ENCODE measurements at regions of chr12 and their contacts with region 1.

Region 1: DNA sequence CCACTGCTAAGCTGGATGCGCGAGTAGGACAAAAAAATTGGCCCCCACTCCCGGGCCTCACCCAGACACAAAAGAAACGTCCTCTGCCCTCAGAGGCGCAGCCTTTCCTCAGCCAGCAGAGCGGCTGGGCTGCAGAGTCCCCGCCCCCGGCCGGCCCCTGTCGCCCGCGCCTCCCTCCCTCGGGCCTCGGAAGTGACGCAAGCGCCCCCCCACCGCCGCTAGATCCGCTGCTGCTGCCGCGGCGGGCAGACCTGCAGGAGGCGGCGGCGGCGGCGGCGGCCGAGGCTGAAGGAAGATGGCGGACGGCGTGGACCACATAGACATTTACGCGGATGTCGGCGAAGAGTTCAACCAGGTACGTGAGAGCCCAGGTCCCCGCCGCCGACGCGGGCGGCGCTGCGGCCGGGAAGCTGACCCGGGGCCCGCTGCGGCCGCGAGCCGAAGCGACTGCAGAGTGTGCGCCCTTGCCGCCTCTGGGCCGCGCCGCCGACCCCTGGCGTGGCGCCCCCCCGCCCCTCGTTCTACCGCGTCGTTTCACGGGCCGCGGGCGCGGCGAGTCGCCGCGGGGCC is at the start of gene CPSF6:
- DNase-seq: peak; percentile 94 to 99 (median 96)
- ATAC-seq: peak; percentile 88
- H3K4me3 ChIP-seq: peak within 1 kb of the TSS; percentile 84 to 95
- H3K4me3 Mint-ChIP-seq: peak within 1 kb of the TSS; percentile 95
- H3K27ac ChIP-seq: peak within 1 kb of the TSS; percentile 68 to 89
- H3K27ac Mint-ChIP-seq: peak within 1 kb of the TSS; percentile 99
- H3K4me1 ChIP-seq: peaks cover 36% of the 10 kb centered on the region
- H3K4me1 Mint-ChIP-seq: peaks cover 51% of the 10 kb centered on the region
- H3K27me3 ChIP-seq: no peaks in the 10 kb centered on the region
- H3K27me3 Mint-ChIP-seq: no peaks in the 10 kb centered on the region
- CTCF ChIP-seq: no peak
- total RNA-seq, gene CPSF6: 78.9 to 81.3 TPM

Region 2: DNA sequence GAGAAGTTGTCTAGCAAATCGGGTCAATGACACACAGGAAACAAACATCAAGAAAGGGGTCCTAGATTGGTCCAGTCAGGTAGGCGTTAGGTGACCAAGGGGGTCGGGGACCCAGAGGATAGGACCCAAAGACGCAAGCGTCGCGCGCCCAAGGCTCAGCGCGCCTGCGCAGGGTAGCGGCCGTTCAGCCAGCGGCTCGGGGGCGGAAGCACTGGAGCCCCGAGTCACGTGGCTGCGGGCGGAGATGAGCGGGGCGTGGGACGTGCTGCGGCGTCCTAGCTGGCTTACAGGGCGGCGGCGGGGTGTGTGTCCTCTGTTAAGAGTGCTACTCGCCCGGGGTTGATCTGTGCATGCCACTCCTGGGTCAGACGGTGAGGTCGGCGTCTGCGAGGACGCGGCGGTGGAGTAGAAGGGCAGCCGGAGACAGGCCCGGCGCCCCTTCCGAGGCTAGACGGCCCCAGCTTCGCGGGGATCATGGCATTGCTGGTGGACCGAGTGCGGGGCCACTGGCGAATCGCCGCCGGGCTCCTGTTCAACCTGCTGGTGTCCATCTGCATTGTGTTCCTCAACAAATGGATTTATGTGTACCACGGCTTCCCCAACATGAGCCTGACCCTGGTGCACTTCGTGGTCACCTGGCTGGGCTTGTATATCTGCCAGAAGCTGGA is 493.4 kb before region 1 on chr12 and contains the start of gene SLC35E3:
- CTCF ChIA-PET with region 1: no interaction called
- POLR2A ChIA-PET with region 1: no interaction called
- intact Hi-C with region 1: loop called in 1 of 2 experiments (anchors 10 kb)
- DNase-seq: peak; percentile 83 to 95 (median 90)
- ATAC-seq: peak; percentile 96
- H3K4me3 ChIP-seq: peak within 1 kb of the TSS; percentile 80 to 96
- H3K4me3 Mint-ChIP-seq: peak within 1 kb of the TSS; percentile 98
- H3K27ac ChIP-seq: peak within 1 kb of the TSS; percentile 73 to 76
- H3K27ac Mint-ChIP-seq: peak within 1 kb of the TSS; percentile 97
- H3K4me1 ChIP-seq: peaks cover 21% of the 10 kb centered on the region
- H3K4me1 Mint-ChIP-seq: peaks cover 48% of the 10 kb centered on the region
- H3K27me3 ChIP-seq: no peaks in the 10 kb centered on the region
- H3K27me3 Mint-ChIP-seq: no peaks in the 10 kb centered on the region
- CTCF ChIP-seq: no peak
- total RNA-seq, gene SLC35E3: 4.0 to 5.7 TPM

Region 3: GRCh38 chr12:68831272-68831671 is 408.2 kb before region 1 on chr12:
- CTCF ChIA-PET with region 1: no interaction called
- POLR2A ChIA-PET with region 1: no interaction called
- intact Hi-C with region 1: loop called in 1 of 2 experiments (anchors 5 kb)
- DNase-seq: no peak
- ATAC-seq: no peak
- H3K4me3 ChIP-seq: no peak overlapping the region
- H3K4me3 Mint-ChIP-seq: no peak overlapping the region
- H3K27ac ChIP-seq: no peak overlapping the region
- H3K27ac Mint-ChIP-seq: no peak overlapping the region
- H3K4me1 ChIP-seq: no peaks in the 10 kb centered on the region
- H3K4me1 Mint-ChIP-seq: peaks cover 8% of the 10 kb centered on the region
- H3K27me3 ChIP-seq: no peaks in the 10 kb centered on the region
- H3K27me3 Mint-ChIP-seq: no peaks in the 10 kb centered on the region
- CTCF ChIP-seq: no peak

Region 4: DNA sequence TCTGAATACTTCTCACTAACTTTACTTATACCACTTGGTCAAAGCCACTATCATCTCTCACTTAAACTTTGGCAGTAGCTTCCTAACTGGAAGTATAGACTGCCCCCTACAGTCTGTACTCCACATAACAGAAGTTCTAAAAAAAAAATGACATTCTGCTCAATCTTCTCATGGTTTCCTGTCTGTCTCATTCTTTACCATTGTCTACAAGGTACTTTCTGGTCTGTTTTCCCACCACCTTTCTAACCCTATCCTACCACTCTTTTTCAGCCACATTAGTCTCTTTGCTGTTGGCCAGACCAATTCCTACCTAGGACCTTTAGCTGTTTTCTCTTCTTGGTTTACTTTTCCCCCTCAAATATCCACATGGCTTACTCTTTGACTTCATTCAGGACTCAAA is 14.6 kb after region 1 on chr12:
- CTCF ChIA-PET with region 1: interaction called, 22 read pairs
- POLR2A ChIA-PET with region 1: interaction called, 5 read pairs
- intact Hi-C with region 1: loop called in 1 of 2 experiments (anchors 1 kb)
- DNase-seq: peak in 2 of 9 experiments; percentile 76 to 84
- ATAC-seq: peak; percentile 93
- H3K4me3 ChIP-seq: no peak overlapping the region
- H3K4me3 Mint-ChIP-seq: no peak overlapping the region
- H3K27ac ChIP-seq: peak overlapping the region in 1 of 2 experiments; percentile 32
- H3K27ac Mint-ChIP-seq: peak overlapping the region; percentile 82
- H3K4me1 ChIP-seq: peaks cover 13% of the 10 kb centered on the region
- H3K4me1 Mint-ChIP-seq: peaks cover 47% of the 10 kb centered on the region
- H3K27me3 ChIP-seq: no peaks in the 10 kb centered on the region
- H3K27me3 Mint-ChIP-seq: no peaks in the 10 kb centered on the region
- CTCF ChIP-seq: peak; percentile 77

Region 5: DNA sequence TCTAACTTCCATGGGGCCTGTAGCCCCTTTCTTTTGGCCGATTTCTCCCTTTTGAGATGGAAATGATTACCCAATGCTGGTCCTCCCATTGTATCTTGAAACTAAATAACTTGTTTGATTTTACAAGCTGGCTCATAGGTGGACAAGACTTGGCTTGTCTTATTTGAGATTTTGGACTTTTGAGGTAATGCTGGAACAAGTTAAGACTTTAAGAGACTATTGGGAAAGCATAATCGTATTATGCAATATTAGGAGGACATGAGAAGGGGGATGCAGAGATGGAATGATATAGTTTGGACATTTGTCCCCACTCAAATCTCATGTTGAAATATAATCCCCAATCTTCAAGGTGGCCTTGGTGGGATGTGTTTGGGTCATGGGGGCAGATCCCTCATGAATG is 59.5 kb after region 1 on chr12:
- CTCF ChIA-PET with region 1: no interaction called
- POLR2A ChIA-PET with region 1: no interaction called
- intact Hi-C with region 1: no loop called
- DNase-seq: no peak
- ATAC-seq: no peak
- H3K4me3 ChIP-seq: no peak overlapping the region
- H3K4me3 Mint-ChIP-seq: no peak overlapping the region
- H3K27ac ChIP-seq: no peak overlapping the region
- H3K27ac Mint-ChIP-seq: no peak overlapping the region
- H3K4me1 ChIP-seq: no peaks in the 10 kb centered on the region
- H3K4me1 Mint-ChIP-seq: no peaks in the 10 kb centered on the region
- H3K27me3 ChIP-seq: no peaks in the 10 kb centered on the region
- H3K27me3 Mint-ChIP-seq: peaks cover 18% of the 10 kb centered on the region
- CTCF ChIP-seq: no peak

Region 6: DNA sequence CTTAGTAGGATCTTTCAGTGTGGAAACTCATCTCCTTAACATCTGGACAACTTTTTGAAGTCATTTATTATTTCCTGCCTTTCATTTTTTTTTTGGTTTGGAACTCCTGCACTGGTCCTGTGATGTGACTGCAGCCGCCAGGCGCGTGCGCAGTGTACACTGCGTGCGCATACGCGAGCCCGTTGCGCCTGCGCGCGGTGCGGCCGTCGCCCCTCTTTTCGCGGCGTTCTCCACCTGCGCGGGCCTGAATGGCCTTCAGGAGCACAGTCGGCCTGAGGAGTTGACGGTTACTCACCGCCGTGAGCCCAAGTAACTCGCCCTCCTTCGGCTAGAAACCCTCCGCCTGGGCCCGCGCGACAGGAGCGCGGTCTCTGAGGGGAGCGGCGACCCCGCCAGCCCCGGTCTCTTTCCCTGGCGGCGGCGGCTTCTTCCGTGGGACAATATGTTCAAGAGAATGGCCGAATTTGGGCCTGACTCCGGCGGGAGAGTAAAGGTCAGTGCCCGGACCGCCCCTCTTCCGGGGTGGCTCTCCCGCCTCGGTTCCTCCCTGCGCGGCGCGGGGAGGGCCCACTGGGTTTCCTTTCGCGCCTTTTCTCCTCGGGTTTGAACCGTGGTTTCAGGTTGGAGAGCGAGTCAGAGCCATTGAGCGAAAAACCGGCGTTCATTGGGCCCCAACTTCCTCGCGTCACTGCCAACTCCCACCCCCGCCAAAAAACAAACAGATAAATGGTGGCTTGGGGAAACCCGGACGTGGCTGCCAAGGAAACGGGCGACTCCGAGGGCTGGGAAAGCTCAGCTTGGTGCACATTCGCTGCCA is 120.3 kb after region 1 on chr12 and contains the start of gene YEATS4:
- CTCF ChIA-PET with region 1: no interaction called
- POLR2A ChIA-PET with region 1: no interaction called
- intact Hi-C with region 1: loop called in 1 of 2 experiments (anchors 1 kb)
- DNase-seq: peak; percentile 68 to 96 (median 83)
- ATAC-seq: peak; percentile 80
- H3K4me3 ChIP-seq: peak within 1 kb of the TSS; percentile 64 to 91
- H3K4me3 Mint-ChIP-seq: peak within 1 kb of the TSS; percentile 90
- H3K27ac ChIP-seq: peak within 1 kb of the TSS; percentile 72 to 95
- H3K27ac Mint-ChIP-seq: peak within 1 kb of the TSS; percentile 95
- H3K4me1 ChIP-seq: peaks cover 15% of the 10 kb centered on the region
- H3K4me1 Mint-ChIP-seq: peaks cover 29% of the 10 kb centered on the region
- H3K27me3 ChIP-seq: no peaks in the 10 kb centered on the region
- H3K27me3 Mint-ChIP-seq: peaks cover 6% of the 10 kb centered on the region
- CTCF ChIP-seq: no peak
- total RNA-seq, gene YEATS4: 24.5 to 27.5 TPM

Region 7: GRCh38 chr12:69585189-69586062 is 346.0 kb after region 1 on chr12 and contains the start of gene CCT2:
- CTCF ChIA-PET with region 1: no interaction called
- POLR2A ChIA-PET with region 1: no interaction called
- intact Hi-C with region 1: loop called (anchors 1 to 2 kb)
- DNase-seq: peak; percentile 92 to 98 (median 97)
- ATAC-seq: peak; percentile 88
- H3K4me3 ChIP-seq: peak within 1 kb of the TSS; percentile 88 to 98
- H3K4me3 Mint-ChIP-seq: peak within 1 kb of the TSS; percentile 96
- H3K27ac ChIP-seq: peak within 1 kb of the TSS; percentile 94 to 99
- H3K27ac Mint-ChIP-seq: peak within 1 kb of the TSS; percentile 96
- H3K4me1 ChIP-seq: peaks cover 11% of the 10 kb centered on the region
- H3K4me1 Mint-ChIP-seq: peaks cover 26% of the 10 kb centered on the region
- H3K27me3 ChIP-seq: no peaks in the 10 kb centered on the region
- H3K27me3 Mint-ChIP-seq: no peaks in the 10 kb centered on the region
- CTCF ChIP-seq: peak; percentile 22
- total RNA-seq, gene CCT2: 211 to 220 TPM

Region 8: GRCh38 chr12:70242695-70243509 is 1003.5 kb after region 1 on chr12 and contains the start of gene CNOT2:
- CTCF ChIA-PET with region 1: no interaction called
- POLR2A ChIA-PET with region 1: no interaction called
- intact Hi-C with region 1: loop called in 1 of 2 experiments (anchors 5 kb)
- DNase-seq: peak; percentile 79 to 96 (median 91)
- ATAC-seq: peak; percentile 78
- H3K4me3 ChIP-seq: peak within 1 kb of the TSS; percentile 94 to 96
- H3K4me3 Mint-ChIP-seq: peak within 1 kb of the TSS; percentile 100
- H3K27ac ChIP-seq: peak within 1 kb of the TSS; percentile 97 to 99
- H3K27ac Mint-ChIP-seq: peak within 1 kb of the TSS; percentile 100
- H3K4me1 ChIP-seq: peaks cover 57% of the 10 kb centered on the region
- H3K4me1 Mint-ChIP-seq: peaks cover 60% of the 10 kb centered on the region
- H3K27me3 ChIP-seq: no peaks in the 10 kb centered on the region
- H3K27me3 Mint-ChIP-seq: no peaks in the 10 kb centered on the region
- CTCF ChIP-seq: no peak
- total RNA-seq, gene CNOT2: 154 to 158 TPM

Measured in CD8-positive, alpha-beta T cell (primary cell).